ENCODE measurements at regions of chr10 and their contacts with region 1.

Region 1: GRCh38 chr10:132331526-132332432 is at the start of gene LRRC27:
- DNase-seq: peak; percentile 100
- H3K4me3 Mint-ChIP-seq: peak within 1 kb of the TSS; percentile 88
- H3K27ac Mint-ChIP-seq: peak within 1 kb of the TSS; percentile 96
- H3K4me1 Mint-ChIP-seq: peaks cover 50% of the 10 kb centered on the region
- H3K27me3 Mint-ChIP-seq: peaks cover 4% of the 10 kb centered on the region
- total RNA-seq, gene LRRC27: 2.3 and 3.3 TPM in 2 replicates

Region 2: DNA sequence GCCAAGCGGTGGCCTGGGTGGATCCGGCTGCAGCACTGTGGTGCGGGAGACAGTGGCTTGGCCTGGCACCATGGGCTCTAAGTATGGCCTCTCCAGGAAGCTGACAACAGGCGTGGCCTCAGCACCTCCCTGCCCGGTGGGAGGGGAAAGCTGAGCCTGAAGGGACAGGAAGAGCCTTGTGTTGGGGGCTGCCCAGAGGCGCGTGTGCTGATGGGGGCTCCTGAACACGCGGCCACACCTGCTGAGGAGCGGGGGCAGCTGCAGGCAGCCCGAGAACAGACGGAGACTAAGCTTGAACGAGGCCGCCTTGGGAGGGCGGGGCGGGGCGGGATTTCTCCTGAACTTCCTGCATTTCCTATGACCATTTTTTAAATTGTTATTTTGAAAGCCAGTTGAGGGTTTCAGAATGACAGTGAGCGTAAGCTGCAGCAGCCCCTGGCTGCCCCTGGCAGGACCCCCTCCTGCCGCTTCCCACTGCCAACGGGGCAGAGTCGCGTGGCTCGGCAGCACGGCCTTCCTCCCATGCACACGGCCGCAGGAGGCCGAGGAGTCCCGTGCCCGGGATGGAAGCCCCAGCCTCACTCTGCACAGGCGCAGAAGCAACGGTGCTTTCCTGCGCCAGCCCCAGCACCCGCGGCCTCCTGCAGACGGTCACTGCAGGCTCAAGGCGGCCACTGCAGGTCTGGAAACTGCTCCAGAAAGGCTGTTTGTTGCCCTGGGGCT is 101.8 kb before region 1 on chr10:
- intact Hi-C with region 1: loop called (anchors 5 kb)
- DNase-seq: peak; percentile 88
- H3K4me3 Mint-ChIP-seq: peak overlapping the region; percentile 82
- H3K27ac Mint-ChIP-seq: peak overlapping the region; percentile 94
- H3K4me1 Mint-ChIP-seq: peaks cover 34% of the 10 kb centered on the region
- H3K27me3 Mint-ChIP-seq: no peaks in the 10 kb centered on the region

Region 3: DNA sequence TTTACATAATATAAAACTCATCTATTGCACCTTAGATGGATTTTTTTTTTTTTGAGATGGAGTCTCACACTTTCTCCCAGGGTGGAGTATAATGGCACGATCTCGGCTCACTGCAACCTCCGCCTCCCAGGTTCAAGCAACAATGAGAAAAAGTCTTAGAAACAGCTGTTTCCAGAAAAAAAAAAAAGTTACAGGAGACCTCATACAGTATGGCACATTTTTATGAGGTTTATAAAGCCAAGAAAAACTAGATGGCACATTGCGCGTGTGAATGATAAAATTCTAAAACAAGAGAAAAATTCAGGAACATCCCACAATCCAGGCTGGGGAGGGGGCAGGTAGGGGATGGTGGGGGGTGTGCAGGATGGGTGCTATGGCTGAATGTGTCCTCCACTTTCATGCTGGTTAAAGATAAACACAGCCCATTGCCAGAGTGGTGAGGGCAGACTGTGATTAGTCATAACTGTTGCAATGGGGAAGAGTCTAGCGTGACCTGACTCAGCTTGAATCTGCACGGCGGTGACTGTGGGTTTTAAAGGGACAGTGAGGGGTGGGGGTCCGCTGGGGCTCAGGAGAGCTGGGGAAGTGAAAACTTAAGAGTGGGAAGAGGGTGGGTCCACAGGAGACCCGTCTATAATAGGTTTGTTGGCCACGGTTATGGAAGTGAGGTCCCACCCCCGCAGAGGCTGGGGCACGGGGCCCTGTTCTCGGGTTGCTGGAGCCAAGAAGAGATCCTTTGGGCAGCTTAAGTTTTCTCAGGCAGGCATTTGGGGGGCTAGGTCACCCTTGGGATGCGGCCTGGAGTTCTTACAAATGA is 11.7 kb before region 1 on chr10:
- intact Hi-C with region 1: loop called (anchors 1 kb)
- DNase-seq: peak; percentile 71
- H3K4me3 Mint-ChIP-seq: no peak overlapping the region
- H3K27ac Mint-ChIP-seq: peak overlapping the region; percentile 67
- H3K4me1 Mint-ChIP-seq: peaks cover 22% of the 10 kb centered on the region
- H3K27me3 Mint-ChIP-seq: peaks cover 6% of the 10 kb centered on the region

Region 4: DNA sequence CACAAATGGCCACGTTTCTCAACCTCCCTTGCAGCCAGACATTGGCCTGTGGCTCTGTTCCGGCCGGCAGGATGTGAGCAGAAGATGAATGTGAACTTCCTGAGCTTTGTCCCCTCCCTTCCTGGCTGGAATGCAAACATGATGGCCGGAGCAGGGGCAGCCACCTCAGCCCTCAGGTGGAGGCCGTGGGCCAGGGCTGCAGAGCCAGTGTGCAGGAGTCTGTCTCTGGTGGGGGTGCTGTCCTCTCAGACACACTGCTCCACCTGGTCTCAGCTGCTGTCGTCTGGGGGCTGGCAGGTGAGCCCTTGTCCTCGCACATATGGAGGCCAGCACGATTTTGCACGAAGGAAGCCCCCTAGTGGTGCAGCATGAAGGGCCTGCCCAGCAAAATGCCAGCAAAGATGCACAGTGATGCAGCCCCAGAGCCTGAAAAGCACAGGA is 39.9 kb after region 1 on chr10:
- intact Hi-C with region 1: no loop called
- DNase-seq: peak; percentile 70
- H3K4me3 Mint-ChIP-seq: no peak overlapping the region
- H3K27ac Mint-ChIP-seq: no peak overlapping the region
- H3K4me1 Mint-ChIP-seq: peaks cover 4% of the 10 kb centered on the region
- H3K27me3 Mint-ChIP-seq: peaks cover 2% of the 10 kb centered on the region